Natural killer cell (primary cell): ENCODE measurements at regions of chr18 and their contacts with region 1.

Region 1: DNA sequence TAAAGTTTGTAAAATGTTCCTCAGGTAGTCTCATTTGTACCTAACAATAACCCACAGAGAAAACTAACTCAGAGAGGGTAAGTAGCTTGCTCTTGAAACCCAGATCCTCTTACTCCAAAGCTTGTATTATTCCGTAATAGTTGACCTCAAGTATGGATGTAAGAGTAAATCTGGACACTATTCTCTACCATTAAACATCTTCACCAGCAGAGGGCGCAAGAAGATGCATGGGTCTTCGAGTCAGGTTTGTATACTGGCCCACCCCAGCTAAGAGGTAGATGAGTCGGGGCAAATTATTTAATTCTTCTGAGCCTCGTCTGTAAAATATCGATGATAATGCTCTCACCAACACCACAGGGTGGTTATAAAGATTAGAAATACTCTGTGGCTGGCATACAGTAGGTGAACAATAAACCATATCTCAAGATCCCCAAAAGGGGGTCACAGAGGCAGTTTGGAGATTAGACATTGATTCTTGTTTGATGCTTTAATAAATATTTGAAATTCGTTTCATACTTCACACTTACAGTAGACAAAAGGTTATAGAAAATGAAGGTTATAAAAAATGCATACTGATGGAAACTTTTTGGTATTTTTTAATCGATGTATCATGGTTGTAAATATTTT is 3.5 kb upstream of the CABLES1 start:
- DNase-seq: peak; percentile 32 to 88
- ATAC-seq: peak; percentile 60 to 68 (median 64)
- H3K4me3 ChIP-seq: no peak overlapping the region
- H3K4me3 Mint-ChIP-seq: peak overlapping the region; percentile 37
- H3K27ac ChIP-seq: no peak overlapping the region
- H3K27ac Mint-ChIP-seq: no peak overlapping the region
- H3K4me1 ChIP-seq: peaks cover 24% of the 10 kb centered on the region
- H3K4me1 Mint-ChIP-seq: peaks cover 12 to 15% of the 10 kb centered on the region in 2 donors
- H3K27me3 ChIP-seq: peaks cover 22% of the 10 kb centered on the region
- H3K27me3 Mint-ChIP-seq: peaks cover 21 to 23% of the 10 kb centered on the region in 2 donors
- CTCF ChIP-seq: peak; percentile 90

Region 2: DNA sequence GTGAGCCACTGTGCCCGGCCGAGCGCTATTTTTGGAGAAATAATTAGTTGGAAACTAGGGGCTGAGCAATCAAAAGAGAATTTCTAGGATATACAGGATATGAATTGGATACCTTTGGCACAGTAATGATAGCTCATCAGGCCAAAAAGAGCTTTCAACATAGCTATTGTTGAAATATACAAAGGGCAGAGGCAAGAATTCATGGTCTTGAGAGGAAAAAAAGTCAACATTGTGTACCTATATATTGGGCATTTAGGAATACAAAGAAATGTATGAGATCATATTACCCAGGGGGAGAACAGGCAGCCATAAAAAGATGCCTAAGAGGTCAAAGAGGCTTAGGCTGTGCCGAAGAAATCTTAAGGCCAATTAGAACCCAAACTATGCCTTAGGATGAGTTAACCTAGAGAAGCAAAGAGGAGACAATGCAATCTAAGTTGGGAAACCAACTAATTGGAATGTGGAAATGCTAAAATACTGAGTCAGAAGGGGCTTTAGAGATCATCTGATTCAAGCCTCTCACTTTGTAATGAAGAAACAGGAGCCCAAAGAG is 99.7 kb before region 1 on chr18:
- intact Hi-C with region 1: loop called (anchors 5 kb)
- DNase-seq: no peak
- ATAC-seq: no peak
- H3K4me3 ChIP-seq: no peak overlapping the region
- H3K4me3 Mint-ChIP-seq: no peak overlapping the region
- H3K27ac ChIP-seq: no peak overlapping the region
- H3K27ac Mint-ChIP-seq: no peak overlapping the region
- H3K4me1 ChIP-seq: no peaks in the 10 kb centered on the region
- H3K4me1 Mint-ChIP-seq: peaks cover 0 to 5% of the 10 kb centered on the region in 2 donors
- H3K27me3 ChIP-seq: no peaks in the 10 kb centered on the region
- H3K27me3 Mint-ChIP-seq: no peaks in the 10 kb centered on the region
- CTCF ChIP-seq: no peak

Region 3: DNA sequence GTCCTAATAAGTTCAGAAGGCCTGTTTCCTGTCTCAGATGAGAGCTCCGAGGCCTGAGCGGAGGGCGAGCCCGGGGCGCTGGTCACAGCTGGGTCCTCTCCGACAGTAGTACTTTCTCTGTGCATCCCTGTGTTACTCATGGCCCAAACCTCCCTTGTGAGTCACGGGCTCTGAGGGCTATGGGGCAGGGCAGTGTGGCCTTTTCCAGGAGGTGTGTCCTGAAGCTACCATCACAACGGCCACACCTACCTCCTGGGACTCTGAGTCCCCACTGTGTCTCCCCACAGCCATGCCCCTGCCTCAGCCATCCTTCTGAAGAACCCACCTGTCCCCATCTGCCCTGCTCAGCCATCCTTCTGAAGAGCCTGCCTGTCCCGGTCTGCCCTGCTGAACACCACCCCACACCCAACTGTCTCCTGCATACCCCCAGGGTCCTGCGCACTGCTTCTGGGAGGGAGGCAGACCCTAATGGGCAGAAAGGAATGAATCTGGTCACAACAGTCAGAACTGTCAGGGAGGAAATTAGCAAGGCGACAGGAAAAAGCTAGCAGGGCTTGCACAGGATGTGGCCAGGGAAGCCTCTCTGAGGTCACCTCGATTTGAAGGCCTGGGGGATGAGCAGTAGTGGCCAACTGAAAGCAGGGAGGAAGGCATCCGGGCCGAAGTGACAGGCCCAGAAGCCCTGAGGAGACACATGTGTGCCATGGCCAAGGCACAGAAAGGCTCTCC is 175.9 kb after region 1 on chr18:
- intact Hi-C with region 1: loop called (anchors 5 kb)
- DNase-seq: peak; percentile 32 to 49
- ATAC-seq: peak; percentile 33 to 61 (median 54)
- H3K4me3 ChIP-seq: no peak overlapping the region
- H3K4me3 Mint-ChIP-seq: peak overlapping the region; percentile 88
- H3K27ac ChIP-seq: peak overlapping the region; percentile 80
- H3K27ac Mint-ChIP-seq: peak overlapping the region; percentile 86 to 97
- H3K4me1 ChIP-seq: peaks cover 40% of the 10 kb centered on the region
- H3K4me1 Mint-ChIP-seq: peaks cover 54 to 56% of the 10 kb centered on the region in 2 donors
- H3K27me3 ChIP-seq: no peaks in the 10 kb centered on the region
- H3K27me3 Mint-ChIP-seq: peaks cover 0 to 4% of the 10 kb centered on the region in 2 donors
- CTCF ChIP-seq: no peak

Region 4: GRCh38 chr18:23357996-23358594 is 226.3 kb after region 1 on chr18:
- intact Hi-C with region 1: loop called (anchors 1 kb)
- DNase-seq: no peak
- ATAC-seq: peak in 1 of 3 donors; percentile 3
- H3K4me3 ChIP-seq: no peak overlapping the region
- H3K4me3 Mint-ChIP-seq: peak overlapping the region; percentile 76
- H3K27ac ChIP-seq: peak overlapping the region; percentile 30
- H3K27ac Mint-ChIP-seq: peak overlapping the region; percentile 75 to 85
- H3K4me1 ChIP-seq: peaks cover 26% of the 10 kb centered on the region
- H3K4me1 Mint-ChIP-seq: peaks cover 34 to 46% of the 10 kb centered on the region in 2 donors
- H3K27me3 ChIP-seq: no peaks in the 10 kb centered on the region
- H3K27me3 Mint-ChIP-seq: no peaks in the 10 kb centered on the region
- CTCF ChIP-seq: no peak

Region 5: DNA sequence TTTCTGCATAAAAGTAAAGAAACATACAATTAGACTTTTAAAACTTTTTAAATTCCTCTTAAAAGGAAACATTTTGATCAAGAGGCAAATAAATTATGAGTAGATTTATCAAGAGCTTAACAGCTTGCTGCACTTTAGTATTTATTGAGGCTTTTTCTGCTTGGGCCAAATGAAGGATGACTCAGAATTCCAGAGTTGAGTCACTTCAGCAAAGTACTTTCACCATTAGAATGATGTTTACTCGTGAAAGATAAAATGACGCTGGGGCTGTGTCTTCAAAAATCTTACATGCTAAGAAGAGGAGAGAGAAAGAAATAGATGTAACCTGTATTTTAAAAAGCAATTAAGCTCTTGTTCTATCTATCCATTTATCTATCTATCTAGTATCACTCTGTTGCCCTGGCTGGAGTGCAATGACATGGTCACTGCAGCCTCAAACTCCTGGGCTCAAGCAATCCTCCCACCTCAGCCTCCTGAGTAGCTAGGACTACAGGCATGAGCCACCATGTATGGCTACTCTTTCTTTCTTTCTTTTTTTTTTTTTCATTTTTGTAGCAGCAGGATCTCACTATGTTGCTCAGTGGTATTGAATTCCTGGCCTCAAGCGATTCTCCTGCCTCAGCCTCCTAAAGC is 246.0 kb after region 1 on chr18:
- intact Hi-C with region 1: loop called (anchors 5 kb)
- DNase-seq: no peak
- ATAC-seq: no peak
- H3K4me3 ChIP-seq: no peak overlapping the region
- H3K4me3 Mint-ChIP-seq: no peak overlapping the region
- H3K27ac ChIP-seq: no peak overlapping the region
- H3K27ac Mint-ChIP-seq: no peak overlapping the region
- H3K4me1 ChIP-seq: no peaks in the 10 kb centered on the region
- H3K4me1 Mint-ChIP-seq: no peaks in the 10 kb centered on the region
- H3K27me3 ChIP-seq: no peaks in the 10 kb centered on the region
- H3K27me3 Mint-ChIP-seq: no peaks in the 10 kb centered on the region
- CTCF ChIP-seq: no peak

Region 6: DNA sequence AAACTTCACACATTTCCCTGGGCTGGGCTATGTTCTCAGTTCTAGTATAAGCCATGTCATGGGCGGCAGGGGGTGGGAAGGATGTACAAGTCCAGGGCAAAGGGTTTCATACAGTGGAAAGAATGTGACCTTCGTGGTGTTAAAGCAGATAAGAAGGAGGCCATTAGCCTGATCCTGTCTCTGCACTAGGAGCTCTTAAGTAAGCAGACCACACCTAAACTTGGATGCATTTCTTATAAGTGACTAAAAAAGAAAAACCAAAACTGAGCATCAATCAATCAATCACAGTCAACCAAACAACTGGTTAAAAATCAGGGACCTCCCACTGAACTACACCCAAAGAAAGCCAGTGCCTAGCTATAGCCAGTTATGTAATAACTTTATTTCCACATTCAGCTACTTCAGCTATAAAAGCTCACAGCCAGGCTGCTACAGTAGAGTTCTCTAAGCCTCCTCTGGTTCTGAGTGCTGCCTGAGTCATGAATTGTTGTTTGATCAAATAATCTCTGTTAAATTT is 274.5 kb after region 1 on chr18:
- intact Hi-C with region 1: loop called (anchors 1 kb)
- DNase-seq: no peak
- ATAC-seq: no peak
- H3K4me3 ChIP-seq: no peak overlapping the region
- H3K4me3 Mint-ChIP-seq: no peak overlapping the region
- H3K27ac ChIP-seq: no peak overlapping the region
- H3K27ac Mint-ChIP-seq: no peak overlapping the region
- H3K4me1 ChIP-seq: no peaks in the 10 kb centered on the region
- H3K4me1 Mint-ChIP-seq: peaks cover 6 to 10% of the 10 kb centered on the region in 2 donors
- H3K27me3 ChIP-seq: no peaks in the 10 kb centered on the region
- H3K27me3 Mint-ChIP-seq: no peaks in the 10 kb centered on the region
- CTCF ChIP-seq: no peak